Activated T-helper 1 cell treated with anti-CD3 and anti-CD28 coated beads, Interleukin-12 subunit alpha, Interleukin-12 subunit beta, Interleukin-2, Interleukin-4 antibody, amounts not matched to agents 30 ng/mL and 10 ng/mL and 1 ng/mL, durations not matched to agents 14 hours and 24 hours and 36 hours (primary cell): ENCODE measurements at regions of chr19 and their contacts with region 1.

Region 1: GRCh38 chr19:51628153-51628939 is 1.9 kb downstream of the SIGLEC5 start:
- DNase-seq: no peak
- H3K4me3 Mint-ChIP-seq: no peak overlapping the region
- H3K27ac Mint-ChIP-seq: no peak overlapping the region
- H3K4me1 Mint-ChIP-seq: no peaks in the 10 kb centered on the region
- H3K27me3 Mint-ChIP-seq: peaks cover 10% of the 10 kb centered on the region

Region 2: DNA sequence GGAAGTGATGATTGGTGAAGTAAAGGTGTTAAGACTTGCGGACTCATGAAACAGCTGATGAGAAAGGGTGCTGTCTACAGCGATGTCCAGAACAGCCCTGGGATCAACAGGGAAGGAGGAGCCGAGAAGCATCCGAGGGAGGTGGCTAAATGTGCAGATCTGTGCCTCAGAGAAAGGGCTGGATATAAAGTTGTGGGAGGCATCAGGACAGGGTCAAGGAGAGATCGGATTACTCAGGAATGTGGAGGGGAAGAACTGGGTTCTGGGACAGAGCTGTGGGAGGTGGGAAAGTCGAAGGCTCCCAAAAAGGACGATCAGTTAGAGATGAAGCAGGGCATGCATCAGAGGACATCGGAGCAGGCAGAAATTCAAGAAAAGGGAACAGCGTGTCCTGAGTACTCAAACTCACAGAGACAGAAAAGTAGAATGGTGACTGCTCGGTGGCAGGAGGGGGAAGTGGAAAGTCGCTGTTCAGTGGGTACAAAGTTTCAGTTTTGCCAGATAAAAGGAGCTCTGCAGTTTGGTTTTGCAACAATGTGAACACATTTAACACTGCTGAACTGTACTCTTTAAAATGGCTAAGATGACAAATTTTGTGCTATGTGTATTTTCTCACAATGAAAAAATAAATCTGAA is 16.4 kb after region 1 on chr19:
- intact Hi-C with region 1: loop called (anchors 1 kb)
- DNase-seq: no peak
- H3K4me3 Mint-ChIP-seq: no peak overlapping the region
- H3K27ac Mint-ChIP-seq: no peak overlapping the region
- H3K4me1 Mint-ChIP-seq: no peaks in the 10 kb centered on the region
- H3K27me3 Mint-ChIP-seq: peaks cover 9% of the 10 kb centered on the region

Region 3: GRCh38 chr19:51676566-51677083 is 48.3 kb after region 1 on chr19:
- intact Hi-C with region 1: no loop called
- DNase-seq: no peak
- H3K4me3 Mint-ChIP-seq: no peak overlapping the region
- H3K27ac Mint-ChIP-seq: no peak overlapping the region
- H3K4me1 Mint-ChIP-seq: no peaks in the 10 kb centered on the region
- H3K27me3 Mint-ChIP-seq: peaks cover 2% of the 10 kb centered on the region

Region 4: GRCh38 chr19:51926784-51927742 is 298.7 kb after region 1 on chr19 and contains the start of gene ZNF613:
- intact Hi-C with region 1: no loop called
- DNase-seq: peak; percentile 73
- H3K4me3 Mint-ChIP-seq: peak within 1 kb of the TSS; percentile 99
- H3K27ac Mint-ChIP-seq: peak within 1 kb of the TSS; percentile 94
- H3K4me1 Mint-ChIP-seq: peaks cover 23% of the 10 kb centered on the region
- H3K27me3 Mint-ChIP-seq: no peaks in the 10 kb centered on the region
- total RNA-seq, gene ZNF613: 3.1 and 3.8 TPM in 2 replicates